Dendritic cell treated with granulocyte-macrophage colony-stimulating factor and Interleukin-4, amounts not matched to agents 40 ng/mL and 50 ng/mL, for 4 days (primary cell): ENCODE measurements at regions of chr6 and their contacts with region 1.

Region 1: DNA sequence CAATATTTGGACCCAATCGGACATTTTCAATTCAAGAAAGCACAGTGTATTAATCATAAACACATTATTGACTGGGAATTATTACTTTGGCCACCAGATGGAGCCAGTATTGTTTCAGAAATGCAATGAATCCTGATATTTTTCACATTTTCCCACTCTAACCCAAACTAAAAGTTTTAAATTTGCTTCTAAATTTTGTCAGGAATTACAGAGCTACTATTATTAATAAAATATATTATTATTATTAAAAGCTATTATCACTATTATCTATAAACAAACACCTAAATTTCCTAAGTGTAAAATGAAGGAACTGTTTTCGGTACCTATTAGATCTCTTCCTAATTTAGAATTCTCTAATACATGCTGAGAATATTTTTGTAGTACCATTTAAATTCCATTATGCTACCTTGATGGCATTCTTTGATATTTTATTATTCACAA is 245.3 kb downstream of the OGFRL1 start:
- H3K4me3 Mint-ChIP-seq: no peak overlapping the region
- H3K27ac Mint-ChIP-seq: no peak overlapping the region
- H3K4me1 Mint-ChIP-seq: no peaks in the 10 kb centered on the region
- H3K27me3 Mint-ChIP-seq: peaks cover 11% of the 10 kb centered on the region

Region 2: GRCh38 chr6:72084992-72085569 is 551.1 kb after region 1 on chr6:
- intact Hi-C with region 1: loop called (anchors 2 kb)
- H3K4me3 Mint-ChIP-seq: no peak overlapping the region
- H3K27ac Mint-ChIP-seq: no peak overlapping the region
- H3K4me1 Mint-ChIP-seq: no peaks in the 10 kb centered on the region
- H3K27me3 Mint-ChIP-seq: peaks cover 1% of the 10 kb centered on the region

Region 3: DNA sequence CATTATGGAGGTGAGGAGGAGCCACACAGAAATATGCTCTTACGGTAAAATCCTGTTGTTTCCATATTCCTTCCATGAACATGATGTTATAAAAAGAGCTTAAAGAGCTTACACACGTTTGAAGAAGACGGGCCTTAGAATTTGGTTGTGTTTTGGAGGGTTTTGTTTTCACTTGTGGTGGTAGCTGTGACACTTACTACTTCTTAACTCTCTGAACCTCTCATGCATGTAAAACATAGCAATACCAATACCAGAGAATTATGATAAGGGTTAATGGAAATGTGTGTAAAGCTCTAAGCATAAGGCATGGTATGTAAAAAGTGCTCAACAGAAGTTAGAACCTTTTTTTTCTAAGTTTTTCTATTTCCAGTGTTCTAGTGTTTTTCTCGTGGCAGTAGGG is 831.8 kb after region 1 on chr6:
- intact Hi-C with region 1: no loop called
- H3K4me3 Mint-ChIP-seq: no peak overlapping the region
- H3K27ac Mint-ChIP-seq: no peak overlapping the region
- H3K4me1 Mint-ChIP-seq: no peaks in the 10 kb centered on the region
- H3K27me3 Mint-ChIP-seq: peaks cover 1% of the 10 kb centered on the region